GM12878 (cell line): ENCODE measurements at regions of chr4 and their contacts with region 1.

Region 1: GRCh38 chr4:87973283-87974169 is 2.0 kb upstream of the SPP1 start:
- DNase-seq: no peak
- ATAC-seq: peak; percentile 93
- H3K4me3 ChIP-seq: no peak overlapping the region
- H3K27ac ChIP-seq: no peak overlapping the region
- H3K4me1 ChIP-seq: no peaks in the 10 kb centered on the region
- H3K27me3 ChIP-seq: no peaks in the 10 kb centered on the region; a peak in 1 of 4 replicates
- CTCF ChIP-seq: peak; percentile 69 to 78 (median 76)
- EP300 ChIP-seq: no peak
- POLR2A ChIP-seq: no peak
- RAD21 ChIP-seq: peak; percentile 61; the same call in 1 of the 2 replicates

Region 2: GRCh38 chr4:87679449-87680169 is 293.9 kb before region 1 on chr4:
- CTCF ChIA-PET with region 1: interaction called, 3 read pairs
- POLR2A ChIA-PET with region 1: no interaction called
- RAD21 ChIA-PET with region 1: no interaction called
- SMC1A ChIA-PET with region 1: no interaction called
- in situ Hi-C with region 1: no loop called
- intact Hi-C with region 1: loop called (anchors 5 kb)
- DNase-seq: peak; percentile 2
- ATAC-seq: peak; percentile 61; the same call in 2 of the 3 replicates
- H3K4me3 ChIP-seq: no peak overlapping the region
- H3K27ac ChIP-seq: no peak overlapping the region
- H3K4me1 ChIP-seq: peaks cover 5% of the 10 kb centered on the region; the same call in 1 of the 2 replicates
- H3K27me3 ChIP-seq: no peaks in the 10 kb centered on the region
- CTCF ChIP-seq: peak; percentile 59 to 73 (median 66)
- EP300 ChIP-seq: no peak
- POLR2A ChIP-seq: no peak
- RAD21 ChIP-seq: peak; percentile 86

Region 3: DNA sequence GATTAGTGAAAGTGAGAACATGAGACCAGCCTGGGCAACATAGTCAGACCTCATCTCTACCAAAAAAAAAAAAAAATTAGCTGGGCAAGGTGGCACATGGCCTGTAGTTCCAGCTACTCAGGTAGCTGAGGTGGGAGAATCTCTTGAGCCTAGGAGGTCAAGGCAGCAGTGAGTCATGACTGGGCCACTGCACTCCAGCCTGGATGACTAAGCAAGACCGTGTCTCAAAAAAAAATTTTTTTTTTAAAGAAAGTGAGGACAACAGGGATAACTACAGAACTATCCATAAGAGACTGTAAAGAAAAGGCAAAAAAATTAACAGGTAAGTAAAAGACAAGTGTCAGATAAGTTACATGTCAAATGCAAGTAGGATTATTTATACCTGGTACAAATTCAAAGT is 11.5 kb before region 1 on chr4:
- CTCF ChIA-PET with region 1: interaction called, 40 read pairs
- POLR2A ChIA-PET with region 1: no interaction called
- RAD21 ChIA-PET with region 1: interaction called, 3 read pairs
- SMC1A ChIA-PET with region 1: interaction called, 16 read pairs
- in situ Hi-C with region 1: no loop called
- intact Hi-C with region 1: no loop called
- DNase-seq: no peak
- ATAC-seq: no peak
- H3K4me3 ChIP-seq: no peak overlapping the region
- H3K27ac ChIP-seq: no peak overlapping the region
- H3K4me1 ChIP-seq: no peaks in the 10 kb centered on the region
- H3K27me3 ChIP-seq: no peaks in the 10 kb centered on the region
- CTCF ChIP-seq: no peak
- EP300 ChIP-seq: no peak
- POLR2A ChIP-seq: no peak
- RAD21 ChIP-seq: no peak

Region 4: GRCh38 chr4:87985097-87985886 is 11.8 kb after region 1 on chr4:
- CTCF ChIA-PET with region 1: interaction called, 10 read pairs
- POLR2A ChIA-PET with region 1: no interaction called
- RAD21 ChIA-PET with region 1: no interaction called
- SMC1A ChIA-PET with region 1: interaction called, 3 read pairs
- in situ Hi-C with region 1: no loop called
- intact Hi-C with region 1: no loop called
- DNase-seq: no peak
- ATAC-seq: peak; percentile 98
- H3K4me3 ChIP-seq: no peak overlapping the region
- H3K27ac ChIP-seq: no peak overlapping the region
- H3K4me1 ChIP-seq: no peaks in the 10 kb centered on the region
- H3K27me3 ChIP-seq: no peaks in the 10 kb centered on the region; a peak in 1 of 4 replicates
- CTCF ChIP-seq: peak; percentile 59 to 80 (median 63)
- EP300 ChIP-seq: no peak
- POLR2A ChIP-seq: no peak
- RAD21 ChIP-seq: peak; percentile 14; the same call in 1 of the 2 replicates